Posterior vena cava (tissue), 2 donors: ENCODE measurements at regions of chr1 and their contacts with region 1.

Region 1: GRCh38 chr1:43067977-43068751 is 103.9 kb downstream of the EBNA1BP2 start:
- DNase-seq: no peak

Region 2: DNA sequence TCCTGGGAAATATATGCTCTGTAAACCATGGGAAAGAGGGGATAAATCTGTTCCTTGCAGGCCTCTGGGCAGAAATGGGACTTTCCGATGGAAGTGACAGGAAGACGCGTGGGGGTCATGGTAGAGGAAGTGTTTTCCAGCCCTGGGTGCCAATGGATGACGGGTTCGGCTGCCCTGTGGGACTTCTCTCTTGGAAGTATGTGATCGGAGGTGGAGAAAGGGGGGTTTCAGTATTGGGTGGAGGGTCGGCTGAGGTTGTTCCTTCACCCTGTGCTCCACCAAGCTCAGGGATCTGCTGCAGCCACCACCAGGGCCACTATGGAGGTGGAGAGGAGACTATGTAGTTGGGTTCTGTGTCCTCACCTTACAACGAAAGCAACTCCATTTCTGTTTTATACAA is 16.5 kb before region 1 on chr1:
- intact Hi-C with region 1: loop called in 1 of 2 experiments (anchors 1 kb)
- DNase-seq: no peak